CD8-positive, alpha-beta T cell (primary cell): ENCODE measurements at regions of chrX and their contacts with region 1.

Region 1: DNA sequence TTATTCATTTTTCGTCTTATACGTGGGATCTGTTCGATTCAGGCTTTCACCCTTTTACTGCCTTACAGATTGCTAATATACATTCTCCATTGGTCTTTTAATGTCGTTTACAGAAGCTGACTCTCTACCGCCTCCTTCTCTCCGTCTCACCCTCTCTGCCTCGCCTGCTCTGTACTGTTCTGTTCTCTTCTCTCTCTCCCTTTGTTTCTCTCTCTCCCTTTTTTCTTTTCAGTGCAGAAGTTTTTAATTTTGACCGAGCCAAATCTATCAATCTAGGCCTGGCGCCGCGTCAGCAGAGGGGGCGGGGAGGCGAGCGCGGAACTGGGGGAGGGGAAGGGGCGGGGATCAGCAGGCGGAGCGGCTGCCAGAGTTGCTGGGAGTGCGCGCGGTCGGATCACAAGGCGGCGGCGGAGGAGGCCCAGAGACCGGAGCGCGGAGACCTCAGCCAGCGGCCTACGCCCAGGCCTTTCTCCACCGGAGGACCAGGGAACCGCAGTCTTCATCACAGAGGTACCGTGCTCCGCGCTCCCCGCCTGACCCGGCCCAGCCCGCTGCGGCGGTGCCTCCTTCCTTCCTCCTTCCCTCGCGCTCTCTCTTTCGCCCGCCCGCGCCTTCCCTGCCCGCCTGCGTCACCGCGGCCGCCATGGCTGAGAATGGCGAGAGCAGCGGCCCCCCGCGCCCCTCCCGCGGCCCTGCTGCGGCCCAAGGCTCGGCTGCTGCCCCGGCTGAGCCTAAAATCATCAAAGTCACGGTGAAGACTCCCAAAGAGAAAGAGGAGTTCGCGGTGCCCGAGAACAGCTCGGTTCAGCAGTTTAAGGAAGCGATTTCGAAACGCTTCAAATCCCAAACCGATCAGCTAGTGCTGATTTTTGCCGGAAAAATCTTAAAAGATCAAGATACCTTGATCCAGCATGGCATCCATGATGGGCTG is at the start of gene UBQLN2:
- DNase-seq: peak; percentile 51 to 88 (median 77)
- ATAC-seq: peak; percentile 78
- H3K4me3 ChIP-seq: peak within 1 kb of the TSS; percentile 77 to 83
- H3K4me3 Mint-ChIP-seq: peak within 1 kb of the TSS; percentile 94
- H3K27ac ChIP-seq: peak within 1 kb of the TSS; percentile 93 to 94
- H3K27ac Mint-ChIP-seq: peak within 1 kb of the TSS; percentile 99
- H3K4me1 ChIP-seq: no peaks in the 10 kb centered on the region
- H3K4me1 Mint-ChIP-seq: peaks cover 22% of the 10 kb centered on the region
- H3K27me3 ChIP-seq: no peaks in the 10 kb centered on the region
- H3K27me3 Mint-ChIP-seq: no peaks in the 10 kb centered on the region
- CTCF ChIP-seq: no peak
- total RNA-seq, gene UBQLN2: 34.3 to 35.6 TPM

Region 2: GRCh38 chrX:54639346-54640102 is 1924.0 kb before region 1 on chrX:
- CTCF ChIA-PET with region 1: no interaction called
- POLR2A ChIA-PET with region 1: no interaction called
- intact Hi-C with region 1: loop called in 1 of 2 experiments (anchors 10 kb)
- DNase-seq: peak; percentile 80 to 97 (median 92)
- ATAC-seq: peak; percentile 88
- H3K4me3 ChIP-seq: peak overlapping the region; percentile 60 to 94
- H3K4me3 Mint-ChIP-seq: peak overlapping the region; percentile 97
- H3K27ac ChIP-seq: peak overlapping the region; percentile 97 to 99
- H3K27ac Mint-ChIP-seq: peak overlapping the region; percentile 99
- H3K4me1 ChIP-seq: peaks cover 6% of the 10 kb centered on the region
- H3K4me1 Mint-ChIP-seq: peaks cover 9% of the 10 kb centered on the region
- H3K27me3 ChIP-seq: no peaks in the 10 kb centered on the region
- H3K27me3 Mint-ChIP-seq: no peaks in the 10 kb centered on the region
- CTCF ChIP-seq: peak; percentile 22

Region 3: GRCh38 chrX:55488593-55489313 is 1074.7 kb before region 1 on chrX:
- CTCF ChIA-PET with region 1: no interaction called
- POLR2A ChIA-PET with region 1: no interaction called
- intact Hi-C with region 1: loop called in 1 of 2 experiments (anchors 10 kb)
- DNase-seq: peak; percentile 30 to 80 (median 67)
- ATAC-seq: peak; percentile 78
- H3K4me3 ChIP-seq: peak overlapping the region; percentile 90 to 91
- H3K4me3 Mint-ChIP-seq: peak overlapping the region; percentile 93
- H3K27ac ChIP-seq: peak overlapping the region; percentile 90 to 94
- H3K27ac Mint-ChIP-seq: peak overlapping the region; percentile 96
- H3K4me1 ChIP-seq: peaks cover 10% of the 10 kb centered on the region
- H3K4me1 Mint-ChIP-seq: peaks cover 14% of the 10 kb centered on the region
- H3K27me3 ChIP-seq: no peaks in the 10 kb centered on the region
- H3K27me3 Mint-ChIP-seq: no peaks in the 10 kb centered on the region
- CTCF ChIP-seq: no peak

Region 4: DNA sequence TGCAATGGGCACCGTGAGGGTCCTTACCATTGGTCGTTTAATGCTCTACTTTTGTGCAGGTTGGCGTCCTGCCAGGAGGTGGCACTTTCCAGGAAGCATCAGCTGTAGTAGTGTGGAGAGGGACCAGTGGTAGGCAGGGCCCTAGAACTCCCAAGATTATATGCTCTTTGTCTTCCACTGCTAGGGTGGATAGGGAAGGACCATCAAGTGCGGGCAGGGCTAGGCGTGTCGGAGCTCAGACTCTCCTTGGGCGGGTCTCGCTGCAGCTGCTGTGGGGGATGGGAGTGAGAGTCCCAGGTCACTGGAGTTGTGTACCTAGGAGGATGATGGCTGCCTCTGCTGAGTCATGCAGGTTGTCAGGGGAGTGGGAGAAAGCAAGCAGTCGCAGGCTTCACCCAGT is 196.6 kb before region 1 on chrX:
- CTCF ChIA-PET with region 1: no interaction called
- POLR2A ChIA-PET with region 1: interaction called, 3 read pairs
- intact Hi-C with region 1: loop called in 1 of 2 experiments (anchors 10 kb)
- DNase-seq: no peak
- ATAC-seq: no peak
- H3K4me3 ChIP-seq: no peak overlapping the region
- H3K4me3 Mint-ChIP-seq: no peak overlapping the region
- H3K27ac ChIP-seq: no peak overlapping the region
- H3K27ac Mint-ChIP-seq: peak overlapping the region; percentile 45
- H3K4me1 ChIP-seq: peaks cover 45% of the 10 kb centered on the region
- H3K4me1 Mint-ChIP-seq: peaks cover 49% of the 10 kb centered on the region
- H3K27me3 ChIP-seq: no peaks in the 10 kb centered on the region
- H3K27me3 Mint-ChIP-seq: no peaks in the 10 kb centered on the region
- CTCF ChIP-seq: no peak

Region 5: GRCh38 chrX:56729152-56729850 is 165.8 kb after region 1 on chrX and contains the start of gene NBDY:
- CTCF ChIA-PET with region 1: interaction called, 7 read pairs
- POLR2A ChIA-PET with region 1: interaction called, 6 read pairs
- intact Hi-C with region 1: loop called (anchors 2 to 5 kb)
- DNase-seq: peak; percentile 1 to 71 (median 33)
- ATAC-seq: peak; percentile 84
- H3K4me3 ChIP-seq: peak within 1 kb of the TSS; percentile 72 to 85
- H3K4me3 Mint-ChIP-seq: peak within 1 kb of the TSS; percentile 92
- H3K27ac ChIP-seq: peak within 1 kb of the TSS; percentile 85 to 88
- H3K27ac Mint-ChIP-seq: peak within 1 kb of the TSS; percentile 93
- H3K4me1 ChIP-seq: peaks cover 4% of the 10 kb centered on the region
- H3K4me1 Mint-ChIP-seq: peaks cover 37% of the 10 kb centered on the region
- H3K27me3 ChIP-seq: no peaks in the 10 kb centered on the region
- H3K27me3 Mint-ChIP-seq: no peaks in the 10 kb centered on the region
- CTCF ChIP-seq: no peak
- total RNA-seq, gene NBDY: 20.6 to 22.5 TPM

Region 6: GRCh38 chrX:57286507-57287251 is 723.2 kb after region 1 on chrX and contains the start of gene FAAH2:
- CTCF ChIA-PET with region 1: no interaction called
- POLR2A ChIA-PET with region 1: no interaction called
- intact Hi-C with region 1: loop called in 1 of 2 experiments (anchors 10 kb)
- DNase-seq: peak; percentile 15 to 85 (median 53)
- ATAC-seq: peak; percentile 89
- H3K4me3 ChIP-seq: peak within 1 kb of the TSS; percentile 45 to 61
- H3K4me3 Mint-ChIP-seq: peak within 1 kb of the TSS; percentile 92
- H3K27ac ChIP-seq: peak within 1 kb of the TSS; percentile 19 to 45
- H3K27ac Mint-ChIP-seq: peak within 1 kb of the TSS; percentile 94
- H3K4me1 ChIP-seq: peaks cover 3% of the 10 kb centered on the region
- H3K4me1 Mint-ChIP-seq: peaks cover 29% of the 10 kb centered on the region
- H3K27me3 ChIP-seq: no peaks in the 10 kb centered on the region
- H3K27me3 Mint-ChIP-seq: no peaks in the 10 kb centered on the region
- CTCF ChIP-seq: no peak
- total RNA-seq, gene FAAH2: 2.9 to 3.5 TPM